Panc1 (cell line): ENCODE measurements at regions of chr6 and their contacts with region 1.

Region 1: GRCh38 chr6:164167873-164168405 is 753.4 kb downstream of the QKI start:
- DNase-seq: no peak
- ATAC-seq: no peak
- H3K4me3 ChIP-seq: no peak overlapping the region
- H3K27ac ChIP-seq: no peak overlapping the region
- H3K4me1 ChIP-seq: no peaks in the 10 kb centered on the region
- H3K27me3 ChIP-seq: no peaks in the 10 kb centered on the region
- CTCF ChIP-seq: no peak

Region 2: DNA sequence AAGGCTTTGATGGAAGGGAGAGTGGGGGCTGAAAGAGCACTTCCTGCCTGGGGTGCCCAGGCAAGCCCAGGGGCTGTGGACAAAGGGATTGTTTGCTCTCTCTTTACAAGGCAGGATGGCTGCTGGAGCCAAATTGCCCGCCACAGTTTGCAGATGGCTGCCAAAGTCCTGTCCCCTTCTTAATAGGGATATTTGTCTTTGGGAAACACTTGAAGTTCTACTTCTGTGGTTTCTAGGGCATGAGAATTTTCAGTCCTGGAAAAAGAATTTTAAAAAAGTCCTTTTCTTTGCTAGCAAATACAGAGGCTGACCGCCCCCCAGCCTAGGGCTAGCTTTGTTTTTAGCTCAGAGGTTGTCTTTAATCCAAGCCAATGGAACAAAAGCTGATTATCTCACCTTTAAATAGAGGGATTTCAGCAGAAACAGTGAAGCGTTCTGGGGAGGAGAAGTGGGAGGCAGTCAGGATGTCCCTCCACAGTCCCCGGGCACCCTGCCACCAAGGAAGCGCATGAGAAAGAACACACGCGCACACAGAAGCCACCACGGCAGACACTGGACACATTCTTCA is 16.7 kb before region 1 on chr6:
- CTCF ChIA-PET with region 1: no interaction called
- POLR2A ChIA-PET with region 1: no interaction called
- in situ Hi-C with region 1: no loop called
- intact Hi-C with region 1: no loop called
- DNase-seq: no peak
- ATAC-seq: no peak
- H3K4me3 ChIP-seq: no peak overlapping the region
- H3K27ac ChIP-seq: no peak overlapping the region
- H3K4me1 ChIP-seq: no peaks in the 10 kb centered on the region
- H3K27me3 ChIP-seq: no peaks in the 10 kb centered on the region
- CTCF ChIP-seq: no peak

Region 3: GRCh38 chr6:165231581-165232561 is 1063.9 kb after region 1 on chr6:
- CTCF ChIA-PET with region 1: no interaction called
- POLR2A ChIA-PET with region 1: no interaction called
- in situ Hi-C with region 1: no loop called
- intact Hi-C with region 1: loop called (anchors 5 kb)
- DNase-seq: peak; percentile 22
- ATAC-seq: peak; percentile 80
- H3K4me3 ChIP-seq: no peak overlapping the region
- H3K27ac ChIP-seq: no peak overlapping the region
- H3K4me1 ChIP-seq: no peaks in the 10 kb centered on the region
- H3K27me3 ChIP-seq: peaks cover 2% of the 10 kb centered on the region; the same call in 1 of the 2 replicates
- CTCF ChIP-seq: peak; percentile 81